ENCODE measurements at regions of chr1 and their contacts with region 1.

Region 1: GRCh38 chr1:27603681-27604578 is at the start of gene AHDC1:
- DNase-seq: peak; percentile 89 to 90
- H3K4me3 ChIP-seq: peak within 1 kb of the TSS; percentile 91
- H3K4me3 Mint-ChIP-seq: peak within 1 kb of the TSS; percentile 98
- H3K27ac Mint-ChIP-seq: peak within 1 kb of the TSS; percentile 84
- H3K4me1 ChIP-seq: peaks cover 33% of the 10 kb centered on the region
- H3K4me1 Mint-ChIP-seq: peaks cover 17% of the 10 kb centered on the region
- H3K27me3 ChIP-seq: no peaks in the 10 kb centered on the region
- H3K27me3 Mint-ChIP-seq: no peaks in the 10 kb centered on the region
- CTCF ChIP-seq: no peak
- total RNA-seq, gene AHDC1: 17.0 and 17.3 TPM in 2 replicates

Region 2: DNA sequence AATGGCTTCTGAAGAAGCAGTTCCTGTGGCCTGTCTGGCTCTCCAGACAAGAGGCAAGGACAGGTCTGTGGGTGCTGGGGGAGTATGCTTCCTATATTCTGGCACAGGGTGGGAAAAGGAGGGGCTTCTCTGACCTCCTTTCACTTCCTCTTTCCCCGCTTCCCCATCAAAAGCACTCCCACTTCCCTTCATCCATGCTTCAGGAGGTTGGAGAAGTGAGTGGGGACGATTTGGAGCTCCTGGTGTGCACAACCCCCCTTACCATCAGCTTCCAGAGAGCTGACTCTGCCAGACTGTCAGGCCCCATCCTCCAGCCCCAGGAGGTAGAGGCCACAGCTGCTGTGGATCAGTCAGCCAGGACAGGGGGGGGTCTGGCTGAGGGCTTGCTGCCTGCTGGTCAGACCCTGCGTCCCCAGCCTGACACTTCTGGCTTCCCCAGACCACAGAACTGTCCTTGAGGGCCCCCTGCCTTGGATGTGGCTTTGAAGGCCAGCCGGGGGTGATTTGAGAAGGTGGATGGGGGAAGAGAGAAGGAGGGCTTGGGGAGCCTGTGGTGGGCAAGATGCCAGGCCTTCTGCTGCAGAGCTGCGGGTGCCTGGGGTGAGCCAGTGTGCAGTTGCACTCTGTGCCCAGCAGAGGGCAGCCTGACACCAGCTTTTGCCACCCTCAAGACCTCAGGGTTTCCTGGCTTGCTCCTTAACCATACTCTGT is 303.4 kb before region 1 on chr1:
- CTCF ChIA-PET with region 1: interaction called, 3 read pairs
- POLR2A ChIA-PET with region 1: no interaction called
- intact Hi-C with region 1: loop called (anchors 1 kb)
- DNase-seq: peak; percentile 56 to 74
- H3K4me3 ChIP-seq: no peak overlapping the region
- H3K4me3 Mint-ChIP-seq: no peak overlapping the region
- H3K27ac Mint-ChIP-seq: no peak overlapping the region
- H3K4me1 ChIP-seq: peaks cover 11% of the 10 kb centered on the region
- H3K4me1 Mint-ChIP-seq: peaks cover 7% of the 10 kb centered on the region
- H3K27me3 ChIP-seq: no peaks in the 10 kb centered on the region
- H3K27me3 Mint-ChIP-seq: no peaks in the 10 kb centered on the region
- CTCF ChIP-seq: peak; percentile 91 to 94

Region 3: DNA sequence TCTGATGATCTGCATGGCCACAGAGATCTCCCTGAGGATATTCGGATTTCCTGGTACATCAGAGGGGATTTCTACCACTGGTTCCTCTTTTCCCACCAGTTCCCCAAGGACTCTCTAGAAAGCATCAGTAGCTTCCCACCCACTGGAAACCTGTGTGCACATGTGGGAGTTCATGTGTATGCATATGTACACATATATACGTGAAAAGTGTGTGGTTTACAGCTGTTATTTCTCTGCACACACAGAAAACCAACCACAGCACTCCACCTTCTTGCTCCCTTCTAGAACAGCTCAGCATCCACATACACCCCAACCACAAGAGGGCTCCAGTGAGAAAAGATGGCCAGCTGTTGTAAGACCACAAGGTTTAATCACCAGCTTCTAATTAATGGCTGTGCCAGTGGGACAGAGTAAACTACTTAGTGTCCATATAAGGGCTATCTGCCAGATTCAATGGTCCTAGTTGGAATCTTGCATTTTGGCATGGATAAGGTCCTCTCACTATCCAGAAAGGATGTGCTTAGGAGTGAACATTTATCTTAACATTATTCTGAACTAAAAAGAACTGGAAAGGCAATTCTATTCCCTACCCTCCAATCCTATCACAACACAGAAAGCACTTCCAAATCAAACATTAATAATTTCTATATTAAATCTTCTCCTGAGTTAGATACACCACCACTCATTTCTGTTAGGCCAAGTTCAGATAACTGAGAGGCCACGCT is 187.4 kb before region 1 on chr1:
- CTCF ChIA-PET with region 1: interaction called, 13 read pairs
- POLR2A ChIA-PET with region 1: no interaction called
- intact Hi-C with region 1: loop called (anchors 1 kb)
- DNase-seq: peak; percentile 51 to 62
- H3K4me3 ChIP-seq: no peak overlapping the region
- H3K4me3 Mint-ChIP-seq: no peak overlapping the region
- H3K27ac Mint-ChIP-seq: no peak overlapping the region
- H3K4me1 ChIP-seq: peaks cover 7% of the 10 kb centered on the region
- H3K4me1 Mint-ChIP-seq: peaks cover 15% of the 10 kb centered on the region
- H3K27me3 ChIP-seq: no peaks in the 10 kb centered on the region
- H3K27me3 Mint-ChIP-seq: no peaks in the 10 kb centered on the region
- CTCF ChIP-seq: peak; percentile 59 to 72

Region 4: DNA sequence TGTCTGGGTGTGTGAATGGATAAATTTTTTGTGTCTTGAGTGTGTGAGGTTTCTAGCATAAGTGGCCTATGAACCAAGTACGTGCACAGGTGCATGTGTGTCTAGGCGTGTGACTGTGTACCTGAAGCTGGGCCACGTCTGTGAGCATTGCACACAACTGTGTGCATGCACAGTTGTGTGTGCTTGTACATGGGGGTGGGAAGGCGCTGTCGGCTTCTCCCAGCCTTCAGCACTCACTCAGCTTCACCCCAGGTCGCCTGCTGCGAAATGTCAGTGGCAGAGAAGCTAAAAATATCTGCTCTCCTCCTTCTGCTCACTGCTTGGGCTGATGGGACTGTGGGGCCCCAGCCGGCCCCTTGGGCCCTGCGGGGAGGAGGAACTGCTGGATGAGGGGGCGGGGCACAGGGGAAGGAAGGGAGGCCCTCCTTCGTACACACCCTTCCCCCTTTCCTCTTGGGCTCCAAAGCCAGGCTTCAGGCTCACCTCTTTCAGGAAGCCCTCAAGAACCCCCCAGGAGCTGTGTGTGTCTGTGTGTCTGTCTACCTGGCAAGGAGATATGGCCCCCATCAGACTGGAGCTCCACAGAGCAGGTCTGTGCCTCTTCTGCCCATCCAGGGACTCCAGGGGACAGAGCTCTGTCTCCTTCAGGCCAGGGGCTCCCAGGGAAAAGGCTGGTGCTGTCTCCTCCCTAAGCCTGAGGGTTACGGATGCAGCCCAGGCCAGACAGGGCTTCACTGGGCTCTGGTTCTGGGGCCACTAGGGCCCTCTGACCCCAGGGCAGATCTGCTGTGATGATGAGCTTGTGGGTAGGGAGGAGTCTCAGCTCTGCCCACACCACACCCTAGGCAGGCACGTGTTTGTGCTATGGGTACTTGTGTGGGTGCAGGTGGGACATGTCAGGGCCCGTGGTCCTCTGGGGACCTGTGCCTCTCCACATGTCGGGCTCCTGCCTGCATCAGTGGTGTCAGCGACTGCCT is 78.3 kb before region 1 on chr1:
- CTCF ChIA-PET with region 1: interaction called, 11 read pairs
- POLR2A ChIA-PET with region 1: no interaction called
- intact Hi-C with region 1: no loop called
- DNase-seq: peak; percentile 64 to 69
- H3K4me3 ChIP-seq: peak overlapping the region; percentile 33
- H3K4me3 Mint-ChIP-seq: peak overlapping the region; percentile 85
- H3K27ac Mint-ChIP-seq: peak overlapping the region; percentile 80
- H3K4me1 ChIP-seq: peaks cover 71% of the 10 kb centered on the region
- H3K4me1 Mint-ChIP-seq: peaks cover 66% of the 10 kb centered on the region
- H3K27me3 ChIP-seq: no peaks in the 10 kb centered on the region
- H3K27me3 Mint-ChIP-seq: no peaks in the 10 kb centered on the region
- CTCF ChIP-seq: no peak

Region 5: DNA sequence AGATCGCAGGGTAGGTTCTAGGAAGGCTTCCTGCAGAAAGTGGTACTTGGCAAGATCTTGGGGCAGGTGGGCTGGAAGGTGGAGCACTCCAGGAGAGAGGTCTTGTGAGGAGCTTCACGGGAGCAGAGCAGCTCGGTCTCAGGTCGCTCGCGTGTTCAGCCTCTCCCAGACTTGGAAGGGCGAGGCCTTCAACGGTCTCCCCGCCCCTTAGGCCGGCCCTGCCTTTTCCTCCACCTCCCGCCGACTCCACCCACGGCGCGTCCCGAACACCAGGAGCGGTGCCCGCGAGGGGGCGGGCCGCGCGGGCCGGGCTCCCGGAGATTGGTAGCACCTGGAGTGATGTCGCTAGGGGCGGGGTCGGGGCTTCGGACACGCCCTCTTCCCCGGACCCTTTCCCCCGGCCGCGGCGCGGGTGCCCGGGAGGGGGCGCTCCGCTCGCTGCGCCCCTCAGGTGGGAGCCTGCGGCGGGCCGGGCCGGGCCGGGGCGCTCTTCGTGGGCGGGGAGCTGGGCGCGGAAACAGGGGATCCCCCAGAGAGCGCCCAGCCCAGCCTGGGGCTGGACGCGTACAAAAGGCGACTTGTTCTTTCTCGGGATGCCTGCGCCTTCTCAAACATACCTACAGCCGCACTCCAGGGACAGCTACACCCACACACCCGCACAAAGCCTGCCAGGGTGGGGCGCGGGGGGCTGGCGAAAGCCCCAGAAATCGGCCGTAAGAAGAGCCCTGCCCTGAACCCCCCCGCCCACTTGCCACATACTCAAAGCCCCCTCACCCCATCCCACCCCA is 35.4 kb before region 1 on chr1:
- CTCF ChIA-PET with region 1: interaction called, 19 read pairs
- POLR2A ChIA-PET with region 1: interaction called, 6 read pairs
- intact Hi-C with region 1: loop called (anchors 2 kb)
- DNase-seq: peak; percentile 95 to 96
- H3K4me3 ChIP-seq: peak overlapping the region; percentile 24
- H3K4me3 Mint-ChIP-seq: peak overlapping the region; percentile 68
- H3K27ac Mint-ChIP-seq: peak overlapping the region; percentile 50
- H3K4me1 ChIP-seq: peaks cover 74% of the 10 kb centered on the region
- H3K4me1 Mint-ChIP-seq: peaks cover 65% of the 10 kb centered on the region
- H3K27me3 ChIP-seq: no peaks in the 10 kb centered on the region
- H3K27me3 Mint-ChIP-seq: no peaks in the 10 kb centered on the region
- CTCF ChIP-seq: peak; percentile 52 to 68

Region 6: DNA sequence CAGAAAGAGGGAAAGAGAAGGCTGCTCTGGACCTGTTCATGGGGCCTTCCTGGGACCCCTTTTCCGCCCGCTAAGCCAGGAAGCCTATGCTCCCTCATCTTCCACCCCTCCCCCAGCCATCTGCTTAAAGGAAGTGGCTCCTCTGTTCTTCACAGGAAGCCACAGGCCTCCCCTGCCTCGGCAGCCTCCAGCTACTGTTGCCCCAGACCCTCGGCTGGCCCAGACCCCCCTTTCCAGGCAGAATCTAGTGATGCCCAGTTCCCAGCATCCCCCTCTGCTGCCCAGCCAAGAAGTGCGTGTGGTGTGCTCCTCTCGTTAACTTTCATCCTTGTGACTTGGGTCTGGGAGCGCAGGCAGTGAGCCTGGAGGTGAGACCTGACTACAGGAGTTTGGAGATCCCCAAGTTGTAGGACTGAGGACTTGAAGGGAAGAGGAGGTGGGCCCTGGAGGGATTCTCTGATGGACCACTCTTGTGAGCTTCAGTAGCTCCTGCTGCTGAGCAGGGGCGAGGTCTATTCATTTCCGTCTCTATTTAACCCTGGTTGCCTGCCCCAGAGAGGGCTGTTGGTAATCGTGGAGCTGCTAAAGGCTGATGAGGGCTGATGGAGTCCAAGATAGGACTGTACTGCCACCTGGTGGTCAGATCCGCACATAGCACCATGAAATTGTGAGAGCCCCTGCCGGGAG is 58.9 kb after region 1 on chr1:
- CTCF ChIA-PET with region 1: interaction called, 53 read pairs
- POLR2A ChIA-PET with region 1: interaction called, 6 read pairs
- intact Hi-C with region 1: loop called (anchors 1 kb)
- DNase-seq: peak; percentile 70 to 84
- H3K4me3 ChIP-seq: no peak overlapping the region
- H3K4me3 Mint-ChIP-seq: no peak overlapping the region
- H3K27ac Mint-ChIP-seq: peak overlapping the region; percentile 42
- H3K4me1 ChIP-seq: peaks cover 10% of the 10 kb centered on the region
- H3K4me1 Mint-ChIP-seq: peaks cover 15% of the 10 kb centered on the region
- H3K27me3 ChIP-seq: no peaks in the 10 kb centered on the region
- H3K27me3 Mint-ChIP-seq: no peaks in the 10 kb centered on the region
- CTCF ChIP-seq: peak; percentile 72 to 75

Region 7: DNA sequence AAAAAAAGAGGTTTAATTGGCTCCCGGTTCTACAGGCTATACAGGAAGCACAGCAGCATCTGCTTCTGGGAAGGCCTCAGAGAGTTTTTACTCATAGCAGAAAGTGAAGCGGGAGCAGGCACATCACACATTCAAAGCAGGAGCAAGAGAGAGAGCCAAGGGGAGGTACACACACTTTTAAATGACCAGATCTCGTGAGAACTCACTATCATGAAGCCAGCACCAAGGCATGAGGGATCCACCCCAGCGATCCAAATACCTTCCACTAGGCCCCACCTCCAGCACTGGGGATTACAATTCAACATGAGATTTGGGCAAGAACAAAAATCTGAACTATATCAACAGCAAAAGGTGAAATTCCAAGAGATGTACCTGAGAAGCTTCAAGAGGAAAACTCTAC is 101.0 kb after region 1 on chr1:
- CTCF ChIA-PET with region 1: no interaction called
- POLR2A ChIA-PET with region 1: no interaction called
- intact Hi-C with region 1: no loop called
- DNase-seq: no peak
- H3K4me3 ChIP-seq: no peak overlapping the region
- H3K4me3 Mint-ChIP-seq: no peak overlapping the region
- H3K27ac Mint-ChIP-seq: no peak overlapping the region
- H3K4me1 ChIP-seq: no peaks in the 10 kb centered on the region
- H3K4me1 Mint-ChIP-seq: no peaks in the 10 kb centered on the region
- H3K27me3 ChIP-seq: no peaks in the 10 kb centered on the region
- H3K27me3 Mint-ChIP-seq: no peaks in the 10 kb centered on the region
- CTCF ChIP-seq: no peak

Region 8: DNA sequence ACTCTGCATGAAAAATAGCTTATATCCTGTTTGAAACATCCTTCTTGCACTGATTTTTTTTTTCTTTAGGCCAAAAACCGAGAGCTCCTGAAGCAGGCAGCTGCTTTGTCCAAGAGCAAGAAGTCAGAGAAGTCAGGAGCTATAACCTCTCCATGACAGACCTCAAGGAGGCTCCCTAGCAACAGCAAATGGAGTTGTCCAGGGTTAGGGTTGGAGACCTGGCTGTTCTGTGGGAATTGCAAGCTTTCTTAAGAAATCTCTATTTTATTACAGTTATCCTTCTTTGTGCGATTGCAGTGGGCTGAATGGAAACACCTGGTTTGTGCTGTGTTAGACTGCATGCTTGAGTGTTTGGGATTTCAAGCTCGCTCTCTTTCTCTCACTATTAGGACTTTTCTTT is 156.5 kb after region 1 on chr1:
- CTCF ChIA-PET with region 1: no interaction called
- POLR2A ChIA-PET with region 1: no interaction called
- intact Hi-C with region 1: no loop called
- DNase-seq: peak; percentile 35 to 36
- H3K4me3 ChIP-seq: no peak overlapping the region
- H3K4me3 Mint-ChIP-seq: no peak overlapping the region
- H3K27ac Mint-ChIP-seq: no peak overlapping the region
- H3K4me1 ChIP-seq: no peaks in the 10 kb centered on the region
- H3K4me1 Mint-ChIP-seq: no peaks in the 10 kb centered on the region
- H3K27me3 ChIP-seq: no peaks in the 10 kb centered on the region
- H3K27me3 Mint-ChIP-seq: no peaks in the 10 kb centered on the region
- CTCF ChIP-seq: peak in 1 of 2 experiments; percentile 28